ENCODE measurements at regions of chr4 and their contacts with region 1.

Region 1: GRCh38 chr4:17511950-17512795 is at the start of gene QDPR:
- DNase-seq: peak; percentile 93
- H3K4me3 ChIP-seq: peak within 1 kb of the TSS; percentile 75 to 79
- H3K27ac ChIP-seq: peak within 1 kb of the TSS in 1 of 2 experiments; percentile 85; a peak in 2 of 4 replicates
- H3K4me1 ChIP-seq: peaks cover 4 to 23% of the 10 kb centered on the region in 2 experiments; a peak in 3 of 4 replicates
- H3K27me3 ChIP-seq: no peaks in the 10 kb centered on the region; the same call in 1 of the 2 replicates
- CTCF ChIP-seq: peak; percentile 48
- EP300 ChIP-seq: no peak
- RAD21 ChIP-seq: peak; percentile 48
- polyA plus RNA-seq, gene QDPR: 68.8 and 83.1 TPM in 2 replicates

Region 2: GRCh38 chr4:17494258-17494657 is 17.9 kb before region 1 on chr4:
- CTCF ChIA-PET with region 1: interaction called, 62 read pairs
- POLR2A ChIA-PET with region 1: interaction called, 67 read pairs
- DNase-seq: no peak
- H3K4me3 ChIP-seq: no peak overlapping the region
- H3K27ac ChIP-seq: peak overlapping the region in 1 of 2 experiments; percentile 58; a peak in 1 of 4 replicates
- H3K4me1 ChIP-seq: peaks cover 5 to 59% of the 10 kb centered on the region in 2 experiments; a peak in 3 of 4 replicates
- H3K27me3 ChIP-seq: no peaks in the 10 kb centered on the region
- CTCF ChIP-seq: no peak
- EP300 ChIP-seq: no peak
- RAD21 ChIP-seq: no peak

Region 3: DNA sequence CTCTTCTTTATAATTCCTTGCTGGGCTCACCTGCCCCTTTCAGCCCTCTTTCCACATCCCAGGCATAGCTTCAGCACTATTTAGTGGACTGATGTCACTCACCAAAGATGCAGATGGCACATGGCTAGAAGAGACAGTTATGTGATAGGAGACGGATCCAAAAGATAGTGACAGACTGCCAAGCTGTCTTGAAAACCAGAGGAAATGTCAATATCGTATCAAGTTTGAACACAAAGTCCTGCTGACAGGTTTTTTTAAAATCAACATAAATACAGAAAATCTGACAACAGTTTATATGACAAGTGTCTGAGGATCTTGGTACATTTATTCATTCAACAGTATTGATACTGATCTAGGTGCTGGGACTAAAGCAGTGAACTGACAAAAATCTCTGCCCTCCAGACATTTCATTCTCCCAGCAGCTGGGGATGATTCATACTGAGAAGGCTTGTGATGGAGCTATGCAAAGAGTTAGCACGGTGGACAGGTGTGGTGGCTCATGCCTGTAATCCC is 17.3 kb after region 1 on chr4:
- CTCF ChIA-PET with region 1: interaction called, 10 read pairs
- POLR2A ChIA-PET with region 1: no interaction called
- DNase-seq: peak; percentile 36
- H3K4me3 ChIP-seq: no peak overlapping the region
- H3K27ac ChIP-seq: no peak overlapping the region
- H3K4me1 ChIP-seq: no peaks in the 10 kb centered on the region; a peak in 1 of 4 replicates
- H3K27me3 ChIP-seq: peaks cover 3% of the 10 kb centered on the region; the same call in 1 of the 2 replicates
- CTCF ChIP-seq: no peak
- EP300 ChIP-seq: no peak
- RAD21 ChIP-seq: no peak

Region 4: GRCh38 chr4:17636696-17637622 is 124.8 kb after region 1 on chr4:
- CTCF ChIA-PET with region 1: no interaction called
- POLR2A ChIA-PET with region 1: interaction called, 10 read pairs
- DNase-seq: peak; percentile 92
- H3K4me3 ChIP-seq: peak overlapping the region in 1 of 2 experiments; percentile 53; a peak in 1 of 4 replicates
- H3K27ac ChIP-seq: no peak overlapping the region
- H3K4me1 ChIP-seq: no peaks in the 10 kb centered on the region; a peak in 1 of 4 replicates
- H3K27me3 ChIP-seq: no peaks in the 10 kb centered on the region
- CTCF ChIP-seq: peak; percentile 92
- EP300 ChIP-seq: no peak
- RAD21 ChIP-seq: peak; percentile 81

Measured in SK-N-SH (cell line).